ENCODE measurements at regions of chr15 and their contacts with region 1.

Region 1: GRCh38 chr15:42511010-42511396 is 15.6 kb downstream of the SNAP23 start:
- DNase-seq: no peak
- H3K4me3 ChIP-seq: no peak overlapping the region
- H3K27ac ChIP-seq: peak overlapping the region; percentile 45 to 54
- H3K4me1 ChIP-seq: no peaks in the 10 kb centered on the region
- H3K27me3 ChIP-seq: no peaks in the 10 kb centered on the region
- CTCF ChIP-seq: no peak
- POLR2A ChIP-seq: no peak

Region 2: DNA sequence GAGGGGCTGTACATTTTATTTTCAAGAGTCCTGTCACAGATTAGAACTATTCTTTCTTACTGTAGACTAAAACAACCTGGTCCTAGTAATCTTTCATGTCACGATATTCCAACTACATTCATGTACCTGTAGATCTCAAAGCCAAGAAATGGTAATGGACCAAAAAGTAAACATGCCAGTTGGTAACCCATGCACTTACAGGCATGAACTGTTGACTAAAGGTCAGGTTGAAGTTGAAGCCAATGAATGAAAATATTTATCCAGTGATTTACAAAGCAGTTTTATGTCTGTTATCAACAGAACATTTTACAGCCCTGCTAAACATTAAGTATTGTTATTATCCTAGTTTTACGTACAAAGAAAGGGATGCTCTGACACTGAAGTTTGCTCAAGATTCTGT is 12.3 kb after region 1 on chr15:
- intact Hi-C with region 1: loop called (anchors 1 kb)
- DNase-seq: no peak
- H3K4me3 ChIP-seq: no peak overlapping the region
- H3K27ac ChIP-seq: no peak overlapping the region
- H3K4me1 ChIP-seq: no peaks in the 10 kb centered on the region
- H3K27me3 ChIP-seq: no peaks in the 10 kb centered on the region
- CTCF ChIP-seq: no peak
- POLR2A ChIP-seq: no peak

Region 3: DNA sequence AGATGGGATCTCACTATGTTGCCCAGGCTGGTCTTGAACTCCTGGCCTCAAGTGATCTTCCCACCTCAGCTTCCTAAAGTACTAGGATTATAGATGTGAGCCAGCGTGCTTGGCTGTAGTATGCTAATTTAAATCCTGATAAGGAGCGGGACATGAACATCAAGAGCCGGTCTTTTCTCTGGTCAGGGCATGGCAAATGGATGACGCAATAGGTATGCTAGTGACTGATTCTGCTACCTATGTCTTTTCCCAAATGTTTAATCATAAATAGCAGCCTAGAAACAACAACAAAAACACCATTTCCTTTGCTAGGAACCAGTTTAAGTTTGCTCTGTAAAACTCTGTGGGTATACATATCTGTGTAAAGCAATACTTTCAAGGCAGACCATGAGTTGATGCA is 129.1 kb after region 1 on chr15:
- intact Hi-C with region 1: no loop called
- DNase-seq: no peak
- H3K4me3 ChIP-seq: no peak overlapping the region
- H3K27ac ChIP-seq: no peak overlapping the region
- H3K4me1 ChIP-seq: no peaks in the 10 kb centered on the region
- H3K27me3 ChIP-seq: no peaks in the 10 kb centered on the region
- CTCF ChIP-seq: no peak
- POLR2A ChIP-seq: no peak

Region 4: GRCh38 chr15:42775416-42775815 is 264.4 kb after region 1 on chr15:
- intact Hi-C with region 1: loop called (anchors 5 kb)
- DNase-seq: no peak
- H3K4me3 ChIP-seq: no peak overlapping the region
- H3K27ac ChIP-seq: no peak overlapping the region
- H3K4me1 ChIP-seq: no peaks in the 10 kb centered on the region
- H3K27me3 ChIP-seq: no peaks in the 10 kb centered on the region
- CTCF ChIP-seq: no peak
- POLR2A ChIP-seq: no peak